Heart left ventricle (tissue), 16 donors: ENCODE measurements at regions of chr3 and their contacts with region 1.

Region 1: GRCh38 chr3:172710664-172711453 is at the start of gene NCEH1:
- DNase-seq: peak; percentile 90 to 94 (median 92)
- ATAC-seq: peak; percentile 97 to 99 (median 98)
- H3K4me3 ChIP-seq: peak within 1 kb of the TSS; percentile 64 to 95 (median 76)
- H3K27ac ChIP-seq: peak within 1 kb of the TSS; percentile 52 to 97 (median 88)
- H3K4me1 ChIP-seq: peaks cover 0 to 45% (median 19%) of the 10 kb centered on the region in 12 donors
- H3K27me3 ChIP-seq: no peaks in the 10 kb centered on the region
- CTCF ChIP-seq: peak; percentile 67 to 97 (median 88)
- POLR2A ChIP-seq: peak; percentile 59 to 97
- total RNA-seq, gene NCEH1: 39.1 to 72.7 (median 52.0) TPM

Region 2: GRCh38 chr3:172750368-172751174 is 39.7 kb after region 1 on chr3 and contains the start of gene ECT2:
- intact Hi-C with region 1: loop called in 3 of 10 experiments (anchors 1 to 2 kb)
- DNase-seq: peak; percentile 98 to 100 (median 98)
- ATAC-seq: peak; percentile 98 to 100 (median 100)
- H3K4me3 ChIP-seq: peak within 1 kb of the TSS; percentile 40 to 88 (median 74)
- H3K27ac ChIP-seq: peak within 1 kb of the TSS; percentile 14 to 86 (median 81)
- H3K4me1 ChIP-seq: peaks cover 0 to 25% (median 9%) of the 10 kb centered on the region in 12 donors
- H3K27me3 ChIP-seq: no peaks in the 10 kb centered on the region
- CTCF ChIP-seq: peak; percentile 65 to 92 (median 78)
- POLR2A ChIP-seq: peak in 1 of 2 donors; percentile 25
- total RNA-seq, gene ECT2: 3.4 to 9.1 (median 4.4) TPM

Region 3: DNA sequence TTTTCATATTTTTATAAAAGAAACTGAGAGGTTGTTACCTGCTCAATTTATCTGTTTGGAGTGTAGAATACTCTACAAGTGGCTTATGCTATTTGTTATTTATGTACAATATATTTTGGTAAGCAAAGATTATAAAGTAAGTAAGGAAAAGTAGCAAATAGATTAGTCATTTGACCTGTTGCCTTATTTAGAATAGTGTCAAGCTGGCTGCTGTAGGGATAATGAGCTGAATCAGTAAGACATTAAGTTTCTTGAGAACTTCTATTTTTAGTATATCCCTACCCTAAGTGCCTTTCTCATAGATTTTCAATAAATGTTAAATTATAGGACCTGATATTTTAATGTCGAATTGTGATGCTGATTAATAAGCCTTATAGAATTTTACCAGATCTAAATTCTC is 76.9 kb after region 1 on chr3:
- intact Hi-C with region 1: no loop called
- DNase-seq: no peak
- ATAC-seq: no peak
- H3K4me3 ChIP-seq: no peak overlapping the region
- H3K27ac ChIP-seq: no peak overlapping the region
- H3K4me1 ChIP-seq: no peaks in the 10 kb centered on the region
- H3K27me3 ChIP-seq: no peaks in the 10 kb centered on the region
- CTCF ChIP-seq: no peak
- POLR2A ChIP-seq: no peak